H1 (cell line): ENCODE measurements at regions of chr2 and their contacts with region 1.

Region 1: GRCh38 chr2:9793156-9793917 is 49.9 kb upstream of the TAF1B start:
- DNase-seq: no peak
- H3K4me3 ChIP-seq: no peak overlapping the region
- H3K27ac ChIP-seq: no peak overlapping the region
- H3K4me1 ChIP-seq: peaks cover 0 to 4% (median under 1%) of the 10 kb centered on the region in 4 experiments; a peak in 3 of 7 replicates
- H3K27me3 ChIP-seq: no peaks in the 10 kb centered on the region
- CTCF ChIP-seq: no peak
- EP300 ChIP-seq: no peak
- POLR2A ChIP-seq: no peak
- RAD21 ChIP-seq: no peak

Region 2: GRCh38 chr2:9408641-9409151 is 384.6 kb before region 1 on chr2:
- CTCF ChIA-PET with region 1: no interaction called
- POLR2A ChIA-PET with region 1: no interaction called
- DNase-seq: no peak
- H3K4me3 ChIP-seq: no peak overlapping the region
- H3K27ac ChIP-seq: no peak overlapping the region
- H3K4me1 ChIP-seq: no peaks in the 10 kb centered on the region
- H3K27me3 ChIP-seq: no peaks in the 10 kb centered on the region
- CTCF ChIP-seq: no peak
- EP300 ChIP-seq: no peak
- POLR2A ChIP-seq: no peak
- RAD21 ChIP-seq: no peak

Region 3: GRCh38 chr2:9675415-9676351 is 117.7 kb before region 1 on chr2:
- CTCF ChIA-PET with region 1: no interaction called
- POLR2A ChIA-PET with region 1: no interaction called
- DNase-seq: peak in 1 of 2 experiments; percentile 50
- H3K4me3 ChIP-seq: no peak overlapping the region
- H3K27ac ChIP-seq: 0 out of 2 replicates have a peak overlapping the region, but pooled peaks have one; percentile 21
- H3K4me1 ChIP-seq: peaks cover 2 to 9% (median 7%) of the 10 kb centered on the region in 4 experiments
- H3K27me3 ChIP-seq: no peaks in the 10 kb centered on the region
- CTCF ChIP-seq: no peak
- EP300 ChIP-seq: no peak
- POLR2A ChIP-seq: no peak
- RAD21 ChIP-seq: no peak

Region 4: DNA sequence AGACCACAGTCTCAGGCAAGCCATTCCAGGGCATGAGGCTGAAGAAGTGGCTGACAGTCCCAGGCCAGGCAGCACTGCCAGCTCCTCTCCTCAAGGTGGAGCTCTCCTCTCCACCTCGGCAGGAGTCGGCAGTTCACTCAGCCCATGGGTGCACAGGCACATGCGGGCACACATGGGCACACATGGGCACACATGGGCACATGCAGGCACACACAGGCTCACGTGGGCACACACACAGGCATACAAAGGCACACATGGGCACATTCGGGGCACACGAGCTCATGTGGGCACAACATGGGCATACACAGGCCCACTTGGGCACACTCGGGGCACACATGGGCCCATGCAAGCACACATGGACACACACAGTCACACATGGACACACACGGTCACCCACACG is 15.3 kb before region 1 on chr2:
- CTCF ChIA-PET with region 1: interaction called, 15 read pairs
- POLR2A ChIA-PET with region 1: interaction called, 3 read pairs
- DNase-seq: no peak
- H3K4me3 ChIP-seq: no peak overlapping the region
- H3K27ac ChIP-seq: no peak overlapping the region
- H3K4me1 ChIP-seq: 0 out of 7 replicates have a peak, but pooled peaks cover 0 to 2% (median 0%) of the 10 kb centered on the region in 4 experiments
- H3K27me3 ChIP-seq: no peaks in the 10 kb centered on the region
- CTCF ChIP-seq: peak in 2 of 3 experiments; percentile 60 to 82; a peak in 3 of 4 replicates
- EP300 ChIP-seq: no peak
- POLR2A ChIP-seq: no peak
- RAD21 ChIP-seq: peak; percentile 51 to 56

Region 5: DNA sequence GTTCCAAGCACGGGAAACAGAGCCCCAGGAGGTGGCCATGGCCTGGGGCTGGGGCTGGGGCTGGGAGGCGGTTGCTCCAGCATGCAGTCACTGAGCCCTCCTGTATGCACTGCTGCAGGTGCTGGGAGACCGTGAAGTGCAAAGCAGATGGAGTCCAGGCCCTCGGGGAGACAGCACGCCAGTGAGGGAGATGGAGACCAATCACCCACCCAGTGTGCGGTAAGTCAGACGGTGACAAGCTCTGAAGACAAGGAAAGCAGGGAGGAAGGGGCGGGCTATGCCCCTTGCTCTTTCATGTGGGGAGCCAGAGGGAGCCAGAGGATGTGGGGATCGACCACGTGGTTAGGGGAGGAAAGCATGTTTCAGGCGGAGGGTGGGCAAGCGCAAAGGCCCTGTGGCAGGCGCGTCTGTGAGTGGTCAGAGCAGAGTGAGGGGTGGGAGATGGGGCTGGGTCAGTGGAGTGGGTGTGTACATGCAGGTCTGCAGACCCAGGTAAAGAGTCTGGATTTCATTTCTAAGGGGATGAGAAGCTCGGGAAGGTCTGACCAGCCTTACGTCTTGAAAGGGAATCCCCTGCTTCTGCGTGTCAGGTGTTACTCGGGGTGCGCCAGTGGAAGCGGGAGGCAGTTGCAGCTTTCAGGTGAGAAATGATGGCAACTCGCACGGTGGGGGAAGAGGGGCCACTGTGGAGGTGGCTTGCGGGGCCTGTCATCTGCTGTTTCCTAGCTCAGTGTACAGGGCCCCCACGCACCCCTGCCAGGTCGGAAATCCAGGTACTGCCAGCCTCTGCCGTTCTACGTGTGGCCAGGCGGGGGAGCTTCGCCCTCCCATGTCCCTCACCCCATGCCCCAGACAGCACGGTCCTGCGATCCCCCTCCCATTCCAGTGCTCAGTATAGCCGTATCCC is 348.7 kb after region 1 on chr2:
- CTCF ChIA-PET with region 1: no interaction called
- POLR2A ChIA-PET with region 1: no interaction called
- DNase-seq: peak in 1 of 2 experiments; percentile 77
- H3K4me3 ChIP-seq: no peak overlapping the region
- H3K27ac ChIP-seq: no peak overlapping the region
- H3K4me1 ChIP-seq: peaks cover 0 to 3% (median 0%) of the 10 kb centered on the region in 4 experiments; a peak in 1 of 7 replicates
- H3K27me3 ChIP-seq: 0 out of 7 replicates have a peak, but pooled peaks cover 0 to 3% (median 0%) of the 10 kb centered on the region in 4 experiments
- CTCF ChIP-seq: peak; percentile 64 to 80 (median 78)
- EP300 ChIP-seq: no peak
- POLR2A ChIP-seq: no peak
- RAD21 ChIP-seq: peak; percentile 64 to 65